ENCODE measurements at regions of chr15 and their contacts with region 1.

Region 1: DNA sequence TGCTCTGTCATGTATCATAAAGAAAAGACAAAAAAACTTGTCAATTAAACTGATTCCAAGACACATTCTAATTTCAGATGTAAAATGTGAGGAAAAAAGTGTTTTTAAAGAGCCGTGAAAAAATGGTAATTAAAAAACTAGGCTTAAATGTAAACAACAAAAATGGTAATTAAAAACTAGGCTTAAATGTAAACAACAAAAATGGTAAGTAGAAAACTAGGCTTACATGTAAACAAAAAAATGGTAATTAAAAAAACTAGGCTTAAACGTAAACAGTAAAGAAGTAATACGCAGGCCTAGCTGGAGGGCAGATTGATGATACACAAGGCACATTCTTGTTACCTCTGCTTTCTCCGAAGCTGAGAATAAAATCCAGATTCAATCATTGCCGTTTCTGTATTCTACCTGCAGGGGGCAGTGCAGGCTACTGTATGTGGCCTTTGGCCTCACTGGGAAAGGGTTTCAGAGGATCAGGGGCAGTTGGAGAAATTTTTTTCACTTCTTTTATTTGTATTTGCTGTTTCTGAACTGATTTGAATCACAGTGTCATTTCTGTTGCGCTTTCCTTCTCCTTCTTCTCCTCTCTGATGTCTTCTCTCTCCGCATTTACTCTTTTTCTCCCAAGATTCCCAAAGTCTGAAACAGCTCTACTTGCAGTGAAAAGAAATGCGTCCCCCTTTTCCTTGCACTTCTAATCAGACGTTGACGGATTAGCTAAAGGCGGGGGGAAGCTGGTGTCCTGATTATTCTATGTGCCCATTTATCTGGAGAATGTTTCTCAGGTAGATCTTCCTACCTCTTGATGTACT is 67.2 kb upstream of the MCTP2 start:
- DNase-seq: no peak
- H3K4me3 ChIP-seq: no peak overlapping the region
- H3K27ac ChIP-seq: no peak overlapping the region
- H3K4me1 ChIP-seq: no peaks in the 10 kb centered on the region
- H3K27me3 ChIP-seq: peaks cover 11% of the 10 kb centered on the region
- CTCF ChIP-seq: peak; percentile 80

Region 2: GRCh38 chr15:94324117-94324826 is 160.1 kb after region 1 on chr15:
- intact Hi-C with region 1: loop called (anchors 5 kb)
- DNase-seq: no peak
- H3K4me3 ChIP-seq: no peak overlapping the region
- H3K27ac ChIP-seq: no peak overlapping the region
- H3K4me1 ChIP-seq: no peaks in the 10 kb centered on the region
- H3K27me3 ChIP-seq: peaks cover 3% of the 10 kb centered on the region
- CTCF ChIP-seq: peak; percentile 96

Measured in left ventricle myocardium inferior (tissue), 1 donor.